Caco-2 (cell line): ENCODE measurements at regions of chr1 and their contacts with region 1.

Region 1: GRCh38 chr1:212608209-212608955 is at the start of gene ATF3:
- DNase-seq: peak; percentile 98 to 99
- H3K4me3 ChIP-seq: peak within 1 kb of the TSS; percentile 81
- H3K4me3 Mint-ChIP-seq: peak within 1 kb of the TSS; percentile 91
- H3K27ac Mint-ChIP-seq: peak within 1 kb of the TSS; percentile 83
- H3K4me1 ChIP-seq: peaks cover 28% of the 10 kb centered on the region
- H3K4me1 Mint-ChIP-seq: peaks cover 34% of the 10 kb centered on the region
- H3K27me3 ChIP-seq: peaks cover 4% of the 10 kb centered on the region; the same call in 1 of the 2 replicates
- H3K27me3 Mint-ChIP-seq: no peaks in the 10 kb centered on the region
- CTCF ChIP-seq: no peak
- total RNA-seq, gene ATF3: 21.8 and 25.8 TPM in 2 replicates

Region 2: GRCh38 chr1:212035123-212035834 is 573.1 kb before region 1 on chr1 and contains the starts of genes DTL and INTS7:
- CTCF ChIA-PET with region 1: no interaction called
- POLR2A ChIA-PET with region 1: interaction called, 10 read pairs
- intact Hi-C with region 1: no loop called
- DNase-seq: peak; percentile 98 to 99
- H3K4me3 ChIP-seq: peak within 1 kb of the TSS; percentile 85
- H3K4me3 Mint-ChIP-seq: peak within 1 kb of the TSS; percentile 96
- H3K27ac Mint-ChIP-seq: peak within 1 kb of the TSS; percentile 96
- H3K4me1 ChIP-seq: no peaks in the 10 kb centered on the region; the same call in 1 of the 2 replicates
- H3K4me1 Mint-ChIP-seq: peaks cover 35% of the 10 kb centered on the region
- H3K27me3 ChIP-seq: no peaks in the 10 kb centered on the region
- H3K27me3 Mint-ChIP-seq: no peaks in the 10 kb centered on the region
- CTCF ChIP-seq: peak; percentile 88 to 89
- total RNA-seq, gene DTL: 20.3 and 23.6 TPM in 2 replicates
- total RNA-seq, gene INTS7: 28.1 and 31.9 TPM in 2 replicates

Region 3: DNA sequence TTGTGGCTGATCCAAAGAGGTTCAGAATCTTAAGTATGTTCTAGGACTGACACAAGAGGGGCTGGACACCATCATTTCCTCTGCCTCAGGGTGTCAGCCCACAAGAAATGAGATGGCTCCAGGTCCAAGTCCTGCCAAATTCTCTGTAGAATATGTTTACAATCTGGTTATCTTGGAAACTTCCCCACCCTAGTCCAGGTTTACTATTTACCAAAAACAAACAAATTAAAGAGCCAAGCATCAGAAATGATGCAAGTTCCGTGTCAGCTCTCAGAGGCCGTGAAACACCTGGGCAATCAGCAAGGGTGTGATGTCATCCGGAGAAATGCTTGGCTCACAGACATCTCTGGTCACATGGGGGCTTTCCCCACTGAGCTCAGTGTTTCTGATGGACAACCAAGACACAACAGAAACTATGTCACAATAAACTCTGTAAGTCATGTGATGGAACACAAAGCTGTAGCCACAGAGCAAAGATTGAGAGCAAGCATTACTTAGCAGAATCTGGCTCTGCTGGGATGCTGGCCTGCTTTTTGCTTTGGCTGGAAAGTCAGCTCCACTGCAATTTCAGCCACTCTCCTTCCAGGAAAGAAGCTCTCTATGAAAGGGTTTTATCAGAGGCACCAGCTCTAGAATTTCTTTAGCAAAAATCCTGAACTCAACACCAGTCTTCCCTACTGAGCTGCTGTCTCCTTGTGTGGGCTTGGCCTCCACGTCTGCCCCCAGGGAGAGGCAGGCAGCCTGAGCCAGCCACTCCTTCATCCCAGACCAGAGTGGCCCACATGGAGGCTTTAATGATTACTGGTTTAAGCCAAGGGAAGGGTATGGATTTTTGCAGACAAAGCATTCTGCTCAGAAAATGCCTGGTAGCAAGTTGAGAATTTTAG is 119.7 kb before region 1 on chr1:
- CTCF ChIA-PET with region 1: no interaction called
- POLR2A ChIA-PET with region 1: interaction called, 16 read pairs
- intact Hi-C with region 1: no loop called
- DNase-seq: peak; percentile 80 to 87
- H3K4me3 ChIP-seq: no peak overlapping the region
- H3K4me3 Mint-ChIP-seq: no peak overlapping the region
- H3K27ac Mint-ChIP-seq: peak overlapping the region; percentile 90
- H3K4me1 ChIP-seq: peaks cover 34% of the 10 kb centered on the region
- H3K4me1 Mint-ChIP-seq: peaks cover 37% of the 10 kb centered on the region
- H3K27me3 ChIP-seq: no peaks in the 10 kb centered on the region
- H3K27me3 Mint-ChIP-seq: no peaks in the 10 kb centered on the region
- CTCF ChIP-seq: no peak

Region 4: DNA sequence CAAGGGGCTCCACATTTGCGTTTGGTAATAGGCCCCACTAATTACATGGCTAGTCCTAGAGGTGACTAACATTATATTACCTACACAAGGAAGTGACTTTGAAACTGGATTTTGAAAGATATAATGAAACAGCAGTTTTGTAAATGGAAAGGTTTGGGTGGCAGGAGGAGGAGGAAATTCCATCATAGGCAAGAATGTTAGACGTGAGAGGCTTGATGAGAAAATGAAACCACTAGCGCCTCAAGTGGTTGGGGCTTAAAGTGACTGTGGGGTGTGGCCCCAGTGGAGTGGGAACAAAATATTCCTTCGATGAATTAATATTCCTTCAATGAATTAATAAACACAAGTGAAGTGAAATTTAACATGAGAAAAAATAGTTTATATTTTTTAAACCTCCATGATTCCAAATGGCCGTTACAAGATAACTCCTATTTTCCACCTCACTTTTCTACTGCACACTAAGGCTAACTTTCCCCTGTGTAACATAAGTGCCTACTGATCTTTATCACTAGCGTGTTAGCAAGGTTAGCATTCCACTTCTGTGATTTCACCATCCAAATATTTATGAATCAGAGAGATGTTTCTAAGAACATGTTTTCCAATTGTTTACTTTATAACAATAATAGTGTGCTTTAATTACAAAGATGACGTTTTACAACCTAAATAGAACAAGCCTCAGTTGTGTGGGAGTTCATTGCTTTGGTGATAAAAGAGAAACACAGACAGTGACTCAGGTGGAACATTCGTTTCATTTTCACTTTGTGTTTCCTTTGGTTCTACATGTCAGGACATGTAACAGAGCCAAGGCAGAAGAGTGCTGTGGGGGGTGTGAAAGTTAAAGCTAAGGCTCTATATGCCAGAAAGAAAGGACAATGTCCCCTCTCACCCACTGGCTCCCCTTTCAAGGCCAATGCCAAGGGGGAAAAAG is 12.3 kb before region 1 on chr1:
- CTCF ChIA-PET with region 1: interaction called, 9 read pairs
- POLR2A ChIA-PET with region 1: interaction called, 9 read pairs
- intact Hi-C with region 1: loop called (anchors 1 kb)
- DNase-seq: peak; percentile 55 to 67
- H3K4me3 ChIP-seq: no peak overlapping the region
- H3K4me3 Mint-ChIP-seq: peak overlapping the region; percentile 54
- H3K27ac Mint-ChIP-seq: peak overlapping the region; percentile 85
- H3K4me1 ChIP-seq: peaks cover 33% of the 10 kb centered on the region
- H3K4me1 Mint-ChIP-seq: peaks cover 49% of the 10 kb centered on the region
- H3K27me3 ChIP-seq: no peaks in the 10 kb centered on the region
- H3K27me3 Mint-ChIP-seq: no peaks in the 10 kb centered on the region
- CTCF ChIP-seq: peak; percentile 63 to 74

Region 5: DNA sequence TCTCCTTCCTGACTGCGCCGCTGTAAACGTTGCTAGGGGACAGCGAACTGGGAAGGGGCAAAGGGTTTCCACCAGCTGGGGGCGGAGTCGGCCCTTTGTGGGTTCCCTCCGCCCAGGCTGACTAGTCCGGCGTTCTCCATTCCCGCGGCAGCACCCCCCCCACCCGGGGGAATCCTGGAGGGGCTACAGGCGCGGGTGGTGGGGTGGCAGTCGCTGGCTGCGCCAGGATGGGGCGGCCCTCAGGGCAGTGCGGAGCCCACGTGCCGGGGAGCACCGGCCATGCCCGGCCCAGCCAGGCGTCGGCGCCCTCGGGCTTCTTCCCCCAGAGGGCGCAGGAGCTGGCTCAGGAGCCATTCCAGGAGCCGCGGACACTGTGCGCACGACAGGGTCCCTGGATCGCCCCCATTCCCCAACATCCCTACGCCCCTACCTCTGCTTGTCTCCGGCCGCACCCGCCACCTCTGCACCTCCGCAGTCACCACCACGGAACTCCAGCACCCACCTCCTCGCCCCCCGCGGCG is 90.8 kb after region 1 on chr1:
- CTCF ChIA-PET with region 1: interaction called, 3 read pairs
- POLR2A ChIA-PET with region 1: interaction called, 7 read pairs
- intact Hi-C with region 1: loop called (anchors 2 kb)
- DNase-seq: peak; percentile 46 to 76
- H3K4me3 ChIP-seq: peak overlapping the region; percentile 58
- H3K4me3 Mint-ChIP-seq: peak overlapping the region; percentile 73
- H3K27ac Mint-ChIP-seq: no peak overlapping the region
- H3K4me1 ChIP-seq: peaks cover 37% of the 10 kb centered on the region
- H3K4me1 Mint-ChIP-seq: peaks cover 22% of the 10 kb centered on the region
- H3K27me3 ChIP-seq: peaks cover 8% of the 10 kb centered on the region
- H3K27me3 Mint-ChIP-seq: peaks cover 35% of the 10 kb centered on the region
- CTCF ChIP-seq: peak in 1 of 2 experiments; percentile 73

Region 6: GRCh38 chr1:212857992-212858460 is 249.6 kb after region 1 on chr1 and contains the start of gene FLVCR1:
- CTCF ChIA-PET with region 1: no interaction called
- POLR2A ChIA-PET with region 1: interaction called, 11 read pairs
- intact Hi-C with region 1: no loop called
- DNase-seq: peak; percentile 99
- H3K4me3 ChIP-seq: peak within 1 kb of the TSS; percentile 59
- H3K4me3 Mint-ChIP-seq: no peak within 1 kb of the TSS
- H3K27ac Mint-ChIP-seq: peak within 1 kb of the TSS; percentile 81
- H3K4me1 ChIP-seq: peaks cover 14% of the 10 kb centered on the region
- H3K4me1 Mint-ChIP-seq: peaks cover 16% of the 10 kb centered on the region
- H3K27me3 ChIP-seq: no peaks in the 10 kb centered on the region
- H3K27me3 Mint-ChIP-seq: no peaks in the 10 kb centered on the region
- CTCF ChIP-seq: no peak
- total RNA-seq, gene FLVCR1: 30.8 and 36.3 TPM in 2 replicates